Activated T-helper 2 cell treated with anti-CD3 and anti-CD28 coated beads, Interferon-gamma antibody, Interleukin-2, Interleukin-4, amounts not matched to agents 10 μg/mL and 5 μg/mL and 100 μg/mL, durations not matched to agents 14 hours and 24 hours and 36 hours (primary cell): ENCODE measurements at regions of chr1 and their contacts with region 1.

Region 1: GRCh38 chr1:173222149-173223030 is 15.3 kb upstream of the TNFSF4 start:
- DNase-seq: no peak
- H3K4me3 Mint-ChIP-seq: no peak overlapping the region
- H3K27ac Mint-ChIP-seq: peak overlapping the region; percentile 40
- H3K4me1 Mint-ChIP-seq: peaks cover 13% of the 10 kb centered on the region
- H3K27me3 Mint-ChIP-seq: peaks cover 7% of the 10 kb centered on the region

Region 2: DNA sequence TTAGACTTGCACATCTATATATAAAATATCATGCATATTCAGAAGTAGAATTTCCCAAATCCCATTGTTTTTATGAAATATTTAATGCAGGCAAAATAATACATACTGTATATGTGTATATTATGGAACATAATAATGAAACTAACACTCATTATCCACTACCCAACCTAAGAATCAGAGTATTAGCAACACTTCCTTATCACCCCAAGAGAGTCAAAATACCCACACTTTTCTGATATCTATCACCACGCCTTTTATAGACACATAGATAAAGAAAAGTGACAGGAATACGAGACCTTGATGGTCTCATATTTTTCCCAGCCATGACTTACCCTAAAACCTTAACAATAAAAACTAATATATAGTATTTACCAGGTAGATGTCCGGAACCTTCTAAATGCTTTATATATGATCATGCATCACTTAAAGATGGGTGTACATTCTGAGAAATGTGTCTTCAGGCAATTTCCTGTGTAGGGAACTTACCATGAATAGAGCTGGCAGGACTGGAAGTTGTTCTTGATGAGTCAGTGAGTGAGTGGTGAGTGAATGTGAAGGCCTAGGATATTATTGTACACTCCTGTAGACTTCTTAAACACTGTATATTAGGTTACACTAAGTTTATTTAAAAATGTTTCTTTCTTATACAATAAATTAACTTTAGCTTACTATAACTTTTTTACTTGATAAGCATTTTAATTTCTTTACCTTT is 60.7 kb before region 1 on chr1:
- intact Hi-C with region 1: loop called (anchors 1 kb)
- DNase-seq: no peak
- H3K4me3 Mint-ChIP-seq: no peak overlapping the region
- H3K27ac Mint-ChIP-seq: no peak overlapping the region
- H3K4me1 Mint-ChIP-seq: peaks cover 5% of the 10 kb centered on the region
- H3K27me3 Mint-ChIP-seq: peaks cover 2% of the 10 kb centered on the region

Region 3: DNA sequence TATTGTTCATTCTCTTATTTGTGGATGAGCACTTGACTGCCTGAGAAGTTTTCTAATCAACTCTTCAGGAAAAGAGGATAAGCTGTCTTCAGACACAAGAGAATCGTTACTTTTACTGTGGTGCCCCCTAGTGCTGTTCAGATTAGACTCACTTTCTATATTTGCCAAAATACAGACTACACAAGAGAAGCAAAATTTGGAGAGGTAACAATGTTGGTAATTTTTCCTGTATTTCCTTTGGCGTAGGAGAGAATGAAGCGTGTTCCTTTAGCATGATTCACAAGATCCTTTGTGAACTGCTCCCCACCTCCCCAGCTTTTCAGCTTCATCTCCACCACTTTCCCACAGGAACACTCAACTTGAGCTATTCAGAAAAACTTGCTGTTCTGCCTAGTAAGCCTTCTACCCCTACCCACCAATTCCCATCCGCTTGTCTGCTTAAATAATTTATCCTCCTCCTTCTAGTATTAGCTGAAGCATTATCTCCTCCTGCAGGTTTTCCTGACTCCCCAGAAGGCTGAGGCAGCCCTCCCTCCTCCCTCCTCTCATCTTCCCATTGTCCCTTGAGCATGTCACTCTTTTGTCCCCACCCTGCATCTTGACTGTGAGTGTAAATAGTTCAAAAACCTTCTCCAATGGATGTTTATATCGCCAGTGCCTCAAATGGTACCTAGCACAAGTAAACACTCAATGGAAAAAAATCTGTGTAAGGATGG is 19.8 kb before region 1 on chr1:
- intact Hi-C with region 1: loop called (anchors 1 kb)
- DNase-seq: no peak
- H3K4me3 Mint-ChIP-seq: no peak overlapping the region
- H3K27ac Mint-ChIP-seq: no peak overlapping the region
- H3K4me1 Mint-ChIP-seq: peaks cover 31% of the 10 kb centered on the region
- H3K27me3 Mint-ChIP-seq: peaks cover 49% of the 10 kb centered on the region

Region 4: DNA sequence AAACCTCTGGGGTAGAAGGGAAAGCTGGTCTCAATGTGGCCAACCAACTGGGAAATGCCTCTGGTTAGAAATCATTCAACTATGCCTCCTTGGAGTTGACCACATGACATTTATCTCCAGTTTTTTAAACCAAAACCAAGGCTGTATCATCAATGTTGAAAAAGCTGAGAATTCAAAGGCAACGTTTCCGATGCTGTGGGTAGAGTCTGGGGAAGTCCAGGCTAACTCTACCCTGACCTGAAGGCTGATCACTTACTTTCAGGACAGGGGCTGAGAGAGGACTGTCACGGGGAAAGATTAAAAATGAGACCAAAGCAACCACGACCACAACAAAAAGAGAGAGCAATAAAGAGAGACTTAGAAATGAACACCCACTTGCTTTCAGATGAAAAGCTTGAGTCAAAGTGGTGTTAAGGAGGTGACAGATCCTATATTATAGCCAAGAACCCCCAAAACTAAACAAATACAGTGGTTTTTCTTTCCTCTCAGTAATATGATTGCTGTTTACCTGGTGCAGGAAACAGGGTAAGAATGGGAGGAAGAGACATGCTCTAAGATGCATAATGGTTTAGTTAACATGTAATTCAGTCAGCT is 75.5 kb after region 1 on chr1:
- intact Hi-C with region 1: loop called (anchors 1 kb)
- DNase-seq: no peak
- H3K4me3 Mint-ChIP-seq: no peak overlapping the region
- H3K27ac Mint-ChIP-seq: peak overlapping the region; percentile 2
- H3K4me1 Mint-ChIP-seq: peaks cover 28% of the 10 kb centered on the region
- H3K27me3 Mint-ChIP-seq: peaks cover 37% of the 10 kb centered on the region